ENCODE measurements at regions of chr21 and their contacts with region 1.

Region 1: GRCh38 chr21:34073032-34073869 is at the starts of genes MRPS6 and SLC5A3:
- DNase-seq: peak; percentile 68 to 78 (median 69)
- H3K4me3 ChIP-seq: peak within 1 kb of the TSS; percentile 37 to 66
- H3K4me3 Mint-ChIP-seq: peak within 1 kb of the TSS; percentile 89 to 97 (median 94)
- H3K27ac ChIP-seq: peak within 1 kb of the TSS; percentile 68
- H3K27ac Mint-ChIP-seq: peak within 1 kb of the TSS; percentile 91 to 97 (median 93)
- H3K4me1 ChIP-seq: peaks cover 39% of the 10 kb centered on the region
- H3K4me1 Mint-ChIP-seq: peaks cover 36 to 54% (median 45%) of the 10 kb centered on the region in 4 donors
- H3K27me3 ChIP-seq: no peaks in the 10 kb centered on the region
- H3K27me3 Mint-ChIP-seq: no peaks in the 10 kb centered on the region
- total RNA-seq, gene MRPS6: 76.9 to 80.1 TPM
- total RNA-seq, gene SLC5A3: 32.8 to 33.4 TPM

Region 2: GRCh38 chr21:33598051-33598450 is 475.2 kb before region 1 on chr21:
- CTCF ChIA-PET with region 1: no interaction called
- POLR2A ChIA-PET with region 1: no interaction called
- intact Hi-C with region 1: no loop called
- DNase-seq: no peak
- H3K4me3 ChIP-seq: no peak overlapping the region
- H3K4me3 Mint-ChIP-seq: no peak overlapping the region
- H3K27ac ChIP-seq: no peak overlapping the region
- H3K27ac Mint-ChIP-seq: no peak overlapping the region
- H3K4me1 ChIP-seq: no peaks in the 10 kb centered on the region
- H3K4me1 Mint-ChIP-seq: no peaks in the 10 kb centered on the region
- H3K27me3 ChIP-seq: no peaks in the 10 kb centered on the region
- H3K27me3 Mint-ChIP-seq: no peaks in the 10 kb centered on the region

Region 3: GRCh38 chr21:34091607-34092006 is 18.4 kb after region 1 on chr21:
- CTCF ChIA-PET with region 1: interaction called, 3 read pairs
- POLR2A ChIA-PET with region 1: interaction called, 3 read pairs
- intact Hi-C with region 1: loop called (anchors 2 kb)
- DNase-seq: no peak
- H3K4me3 ChIP-seq: no peak overlapping the region
- H3K4me3 Mint-ChIP-seq: peak overlapping the region in 3 of 8 donors; percentile 7 to 62 (median 11)
- H3K27ac ChIP-seq: no peak overlapping the region
- H3K27ac Mint-ChIP-seq: peak overlapping the region in 2 of 7 donors; percentile 30 to 41
- H3K4me1 ChIP-seq: peaks cover 58% of the 10 kb centered on the region
- H3K4me1 Mint-ChIP-seq: peaks cover 39 to 57% (median 45%) of the 10 kb centered on the region in 4 donors
- H3K27me3 ChIP-seq: no peaks in the 10 kb centered on the region
- H3K27me3 Mint-ChIP-seq: no peaks in the 10 kb centered on the region

Region 4: GRCh38 chr21:34122047-34122446 is 48.8 kb after region 1 on chr21:
- CTCF ChIA-PET with region 1: no interaction called
- POLR2A ChIA-PET with region 1: no interaction called
- intact Hi-C with region 1: no loop called
- DNase-seq: no peak
- H3K4me3 ChIP-seq: no peak overlapping the region
- H3K4me3 Mint-ChIP-seq: no peak overlapping the region
- H3K27ac ChIP-seq: no peak overlapping the region
- H3K27ac Mint-ChIP-seq: peak overlapping the region in 1 of 7 donors; percentile 8
- H3K4me1 ChIP-seq: no peaks in the 10 kb centered on the region
- H3K4me1 Mint-ChIP-seq: peaks cover 32 to 59% (median 45%) of the 10 kb centered on the region in 4 donors
- H3K27me3 ChIP-seq: no peaks in the 10 kb centered on the region
- H3K27me3 Mint-ChIP-seq: no peaks in the 10 kb centered on the region

Region 5: GRCh38 chr21:34202553-34203372 is 129.5 kb after region 1 on chr21:
- CTCF ChIA-PET with region 1: interaction called, 4 read pairs
- POLR2A ChIA-PET with region 1: interaction called, 4 read pairs
- intact Hi-C with region 1: loop called (anchors 5 kb)
- DNase-seq: no peak
- H3K4me3 ChIP-seq: no peak overlapping the region
- H3K4me3 Mint-ChIP-seq: peak overlapping the region; percentile 46 to 87 (median 80)
- H3K27ac ChIP-seq: no peak overlapping the region
- H3K27ac Mint-ChIP-seq: peak overlapping the region in 2 of 7 donors; percentile 31 to 52
- H3K4me1 ChIP-seq: peaks cover 32% of the 10 kb centered on the region
- H3K4me1 Mint-ChIP-seq: peaks cover 32 to 50% (median 36%) of the 10 kb centered on the region in 4 donors
- H3K27me3 ChIP-seq: no peaks in the 10 kb centered on the region
- H3K27me3 Mint-ChIP-seq: no peaks in the 10 kb centered on the region

Measured in CD4-positive, alpha-beta memory T cell (primary cell).